ENCODE measurements at regions of chr4 and their contacts with region 1.

Region 1: GRCh38 chr4:153785910-153786721 is 2.8 kb downstream of the SFRP2 start:
- DNase-seq: peak in 3 of 14 experiments; percentile 16 to 32 (median 31)
- ATAC-seq: no peak
- H3K4me3 ChIP-seq: no peak overlapping the region
- H3K4me3 Mint-ChIP-seq: no peak overlapping the region
- H3K27ac ChIP-seq: no peak overlapping the region
- H3K27ac Mint-ChIP-seq: no peak overlapping the region
- H3K4me1 ChIP-seq: peaks cover 30% of the 10 kb centered on the region
- H3K4me1 Mint-ChIP-seq: peaks cover 22% of the 10 kb centered on the region
- H3K27me3 ChIP-seq: peaks cover 47 to 71% of the 10 kb centered on the region in 2 experiments
- H3K27me3 Mint-ChIP-seq: peaks cover 91% of the 10 kb centered on the region
- CTCF ChIP-seq: peak; percentile 26

Region 2: DNA sequence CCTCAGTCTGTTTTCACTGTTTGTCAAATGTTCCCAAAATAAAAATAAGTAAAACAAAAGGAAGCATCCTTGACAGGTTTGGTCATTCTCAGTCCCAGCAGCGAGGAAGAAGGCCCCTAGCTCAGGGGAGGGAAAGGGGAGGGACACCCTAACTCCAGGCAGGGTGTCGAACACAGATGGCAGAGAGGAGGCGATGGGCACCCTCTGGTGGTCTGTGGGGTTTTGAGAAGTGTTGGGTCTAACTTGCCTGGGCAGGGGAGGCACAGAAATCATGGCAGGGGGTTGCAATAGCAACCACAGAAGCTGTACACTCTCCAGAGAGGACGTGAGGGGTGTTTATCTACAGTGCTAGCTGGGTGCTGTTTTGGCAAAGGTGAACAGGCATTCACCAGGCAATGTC is 232.5 kb after region 1 on chr4:
- CTCF ChIA-PET with region 1: no interaction called
- POLR2A ChIA-PET with region 1: no interaction called
- intact Hi-C with region 1: loop called (anchors 5 kb)
- DNase-seq: peak in 8 of 14 experiments; percentile 3 to 34 (median 13)
- ATAC-seq: peak; percentile 34
- H3K4me3 ChIP-seq: no peak overlapping the region
- H3K4me3 Mint-ChIP-seq: no peak overlapping the region
- H3K27ac ChIP-seq: no peak overlapping the region
- H3K27ac Mint-ChIP-seq: no peak overlapping the region
- H3K4me1 ChIP-seq: no peaks in the 10 kb centered on the region
- H3K4me1 Mint-ChIP-seq: no peaks in the 10 kb centered on the region
- H3K27me3 ChIP-seq: no peaks in the 10 kb centered on the region
- H3K27me3 Mint-ChIP-seq: peaks cover 16% of the 10 kb centered on the region
- CTCF ChIP-seq: no peak

Region 3: GRCh38 chr4:154024097-154024694 is 238.1 kb after region 1 on chr4:
- CTCF ChIA-PET with region 1: no interaction called
- POLR2A ChIA-PET with region 1: no interaction called
- intact Hi-C with region 1: loop called (anchors 5 kb)
- DNase-seq: peak in 1 of 14 experiments; percentile 8
- ATAC-seq: no peak
- H3K4me3 ChIP-seq: no peak overlapping the region
- H3K4me3 Mint-ChIP-seq: no peak overlapping the region
- H3K27ac ChIP-seq: no peak overlapping the region
- H3K27ac Mint-ChIP-seq: no peak overlapping the region
- H3K4me1 ChIP-seq: no peaks in the 10 kb centered on the region
- H3K4me1 Mint-ChIP-seq: no peaks in the 10 kb centered on the region
- H3K27me3 ChIP-seq: peaks cover 0 to 4% of the 10 kb centered on the region in 2 experiments
- H3K27me3 Mint-ChIP-seq: peaks cover 27% of the 10 kb centered on the region
- CTCF ChIP-seq: no peak

Region 4: DNA sequence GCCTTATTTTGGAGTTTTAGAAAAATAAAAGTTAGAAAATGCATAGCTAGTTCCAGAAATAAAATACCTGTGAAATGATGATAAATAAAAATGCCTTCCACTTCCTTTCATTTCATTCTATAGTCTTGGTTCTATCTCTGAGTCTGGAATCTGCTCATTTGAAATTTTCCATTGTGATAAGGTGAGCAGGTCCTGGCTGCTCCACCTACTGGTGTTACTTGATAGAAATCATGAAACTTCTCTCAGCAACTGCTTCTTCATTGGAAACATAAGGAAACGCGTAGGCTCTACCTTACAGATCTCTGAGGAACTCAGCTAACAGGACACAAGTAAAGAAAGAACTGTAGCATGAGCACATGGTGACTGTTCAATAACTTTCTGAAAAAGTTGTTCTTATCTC is 563.7 kb after region 1 on chr4:
- CTCF ChIA-PET with region 1: no interaction called
- POLR2A ChIA-PET with region 1: no interaction called
- intact Hi-C with region 1: loop called (anchors 5 to 10 kb)
- DNase-seq: peak in 2 of 14 experiments; percentile 11 to 19
- ATAC-seq: no peak
- H3K4me3 ChIP-seq: no peak overlapping the region
- H3K4me3 Mint-ChIP-seq: no peak overlapping the region
- H3K27ac ChIP-seq: no peak overlapping the region
- H3K27ac Mint-ChIP-seq: no peak overlapping the region
- H3K4me1 ChIP-seq: no peaks in the 10 kb centered on the region
- H3K4me1 Mint-ChIP-seq: no peaks in the 10 kb centered on the region
- H3K27me3 ChIP-seq: peaks cover 0 to under 1% of the 10 kb centered on the region in 2 experiments
- H3K27me3 Mint-ChIP-seq: peaks cover 14% of the 10 kb centered on the region
- CTCF ChIP-seq: peak; percentile 46

Region 5: DNA sequence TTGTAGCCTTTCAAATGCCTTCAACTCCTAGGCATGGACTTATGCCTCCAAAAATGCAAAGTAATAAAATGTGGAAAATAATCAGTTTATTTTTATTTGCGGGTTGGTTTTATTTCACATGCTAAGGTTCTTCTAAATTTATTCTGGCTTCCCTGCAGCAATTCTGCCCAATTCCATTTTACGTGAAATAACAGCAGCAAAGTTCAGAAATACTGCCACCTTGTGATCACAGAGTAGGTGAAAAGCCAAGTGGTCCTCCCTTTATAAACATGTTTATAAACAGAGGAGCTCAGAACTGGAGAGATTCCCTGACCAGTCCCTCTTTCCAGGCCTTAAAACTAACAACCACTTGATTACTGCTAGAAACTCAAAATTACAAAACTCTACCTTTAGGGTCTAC is 720.1 kb after region 1 on chr4:
- CTCF ChIA-PET with region 1: no interaction called
- POLR2A ChIA-PET with region 1: no interaction called
- intact Hi-C with region 1: loop called in 1 of 2 experiments (anchors 10 kb)
- DNase-seq: peak in 3 of 14 experiments; percentile 5 to 13 (median 8)
- ATAC-seq: no peak
- H3K4me3 ChIP-seq: no peak overlapping the region
- H3K4me3 Mint-ChIP-seq: no peak overlapping the region
- H3K27ac ChIP-seq: no peak overlapping the region
- H3K27ac Mint-ChIP-seq: no peak overlapping the region
- H3K4me1 ChIP-seq: no peaks in the 10 kb centered on the region
- H3K4me1 Mint-ChIP-seq: no peaks in the 10 kb centered on the region
- H3K27me3 ChIP-seq: peaks cover 0 to 4% of the 10 kb centered on the region in 2 experiments
- H3K27me3 Mint-ChIP-seq: peaks cover 50% of the 10 kb centered on the region
- CTCF ChIP-seq: peak; percentile 17

Region 6: DNA sequence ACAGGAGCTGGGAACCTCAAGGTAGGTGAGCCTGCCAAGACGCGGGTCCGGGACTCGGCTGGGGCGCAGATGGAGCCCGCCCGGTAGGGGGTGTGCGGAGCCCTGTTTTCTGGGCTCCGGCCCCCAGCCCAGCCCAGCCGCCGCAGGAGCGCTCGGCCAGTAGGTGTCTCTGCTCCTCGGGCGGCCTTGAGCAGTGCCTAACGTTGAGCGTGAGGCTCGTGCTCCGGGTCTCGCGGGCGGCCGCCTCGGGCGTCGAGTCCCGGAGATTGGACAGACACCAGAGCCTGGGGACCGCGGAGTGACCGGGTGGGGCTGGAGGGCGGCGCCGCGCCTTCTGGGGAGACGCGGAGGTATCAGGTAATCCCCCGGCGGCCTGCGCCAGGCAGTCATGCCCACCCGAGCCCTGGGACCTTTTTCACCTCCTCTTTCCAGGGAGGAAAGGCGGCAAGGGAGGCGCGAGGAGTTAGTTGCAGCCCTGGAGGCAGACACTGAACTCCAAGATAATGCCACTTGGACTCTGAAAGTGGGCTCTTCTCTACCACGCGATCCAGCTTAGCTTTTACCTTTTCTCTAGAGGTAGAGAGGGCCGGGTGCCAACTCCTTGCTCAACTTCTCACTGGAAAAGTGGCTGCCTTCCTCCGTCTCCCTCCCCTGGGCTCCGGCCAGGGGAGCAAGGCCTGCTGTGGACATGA is 840.8 kb after region 1 on chr4:
- CTCF ChIA-PET with region 1: no interaction called
- POLR2A ChIA-PET with region 1: no interaction called
- intact Hi-C with region 1: loop called in 1 of 2 experiments (anchors 10 kb)
- DNase-seq: peak in 13 of 14 experiments; percentile 4 to 60 (median 34)
- ATAC-seq: peak; percentile 64
- H3K4me3 ChIP-seq: peak overlapping the region; percentile 31
- H3K4me3 Mint-ChIP-seq: no peak overlapping the region
- H3K27ac ChIP-seq: no peak overlapping the region
- H3K27ac Mint-ChIP-seq: no peak overlapping the region
- H3K4me1 ChIP-seq: peaks cover 12% of the 10 kb centered on the region
- H3K4me1 Mint-ChIP-seq: no peaks in the 10 kb centered on the region
- H3K27me3 ChIP-seq: peaks cover 22 to 49% of the 10 kb centered on the region in 2 experiments
- H3K27me3 Mint-ChIP-seq: peaks cover 30% of the 10 kb centered on the region
- CTCF ChIP-seq: peak; percentile 44

Measured in CD4-positive, alpha-beta T cell (primary cell).